GM12878 (cell line): ENCODE measurements at regions of chr22 and their contacts with region 1.

Region 1: GRCh38 chr22:25447686-25448434 is 116.6 kb upstream of the GRK3 start:
- DNase-seq: peak; percentile 84
- ATAC-seq: peak; percentile 92
- H3K4me3 ChIP-seq: peak overlapping the region; percentile 83
- H3K27ac ChIP-seq: peak overlapping the region; percentile 70
- H3K4me1 ChIP-seq: no peaks in the 10 kb centered on the region; the same call in 1 of the 2 replicates
- H3K27me3 ChIP-seq: no peaks in the 10 kb centered on the region
- CTCF ChIP-seq: peak; percentile 85 to 97 (median 93)
- EP300 ChIP-seq: no peak
- POLR2A ChIP-seq: peak; percentile 64
- RAD21 ChIP-seq: peak; percentile 42

Region 2: GRCh38 chr22:25235547-25236290 is 212.1 kb before region 1 on chr22:
- CTCF ChIA-PET with region 1: interaction called, 4 read pairs
- POLR2A ChIA-PET with region 1: no interaction called
- RAD21 ChIA-PET with region 1: no interaction called
- SMC1A ChIA-PET with region 1: no interaction called
- in situ Hi-C with region 1: no loop called
- intact Hi-C with region 1: loop called (anchors 5 kb)
- DNase-seq: no peak
- ATAC-seq: peak; percentile 99
- H3K4me3 ChIP-seq: no peak overlapping the region
- H3K27ac ChIP-seq: no peak overlapping the region
- H3K4me1 ChIP-seq: no peaks in the 10 kb centered on the region
- H3K27me3 ChIP-seq: no peaks in the 10 kb centered on the region
- CTCF ChIP-seq: peak; percentile 75 to 93 (median 87)
- EP300 ChIP-seq: no peak
- POLR2A ChIP-seq: no peak
- RAD21 ChIP-seq: peak; percentile 83

Region 3: DNA sequence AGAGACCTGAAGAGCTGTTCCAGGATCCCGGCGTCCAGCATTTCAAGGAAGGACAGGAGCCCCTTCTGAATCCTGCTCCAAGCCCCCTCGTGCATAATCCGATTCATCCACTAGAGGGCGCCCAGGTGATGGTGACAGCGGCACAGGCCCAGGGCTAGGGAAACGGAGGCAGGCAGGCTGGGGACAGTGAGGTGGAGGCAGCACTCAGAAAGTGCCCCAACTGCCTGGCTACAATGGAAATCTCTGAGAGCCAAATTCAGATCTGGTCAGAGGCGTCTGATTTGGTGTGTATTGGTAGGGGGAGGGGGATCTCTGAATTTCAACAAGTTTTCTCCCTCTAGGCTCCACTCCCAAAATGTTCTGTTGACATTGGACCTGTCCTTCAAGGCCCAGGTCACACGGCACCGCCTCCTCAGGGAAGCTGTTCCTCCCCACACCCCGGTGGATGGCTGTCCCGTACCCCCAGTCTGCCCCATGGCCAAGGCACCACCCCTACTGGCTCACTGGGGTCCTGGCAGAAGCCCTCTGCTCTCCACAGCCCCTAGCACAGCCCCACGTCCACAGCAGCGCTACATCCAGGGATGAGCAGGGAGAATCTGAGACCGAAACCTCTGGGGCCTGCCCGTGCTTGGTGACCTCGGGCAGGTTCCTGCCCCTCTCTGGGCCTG is 85.5 kb before region 1 on chr22:
- CTCF ChIA-PET with region 1: interaction called, 6 read pairs
- POLR2A ChIA-PET with region 1: no interaction called
- RAD21 ChIA-PET with region 1: interaction called, 3 read pairs
- SMC1A ChIA-PET with region 1: interaction called, 4 read pairs
- in situ Hi-C with region 1: loop called (anchors 5 kb)
- intact Hi-C with region 1: loop called (anchors 2 kb)
- DNase-seq: no peak
- ATAC-seq: peak; percentile 95
- H3K4me3 ChIP-seq: no peak overlapping the region
- H3K27ac ChIP-seq: no peak overlapping the region
- H3K4me1 ChIP-seq: peaks cover 5% of the 10 kb centered on the region; the same call in 1 of the 2 replicates
- H3K27me3 ChIP-seq: no peaks in the 10 kb centered on the region
- CTCF ChIP-seq: peak; percentile 80 to 88 (median 86); a peak in 5 of 6 replicates
- EP300 ChIP-seq: no peak
- POLR2A ChIP-seq: no peak
- RAD21 ChIP-seq: peak; percentile 93

Region 4: DNA sequence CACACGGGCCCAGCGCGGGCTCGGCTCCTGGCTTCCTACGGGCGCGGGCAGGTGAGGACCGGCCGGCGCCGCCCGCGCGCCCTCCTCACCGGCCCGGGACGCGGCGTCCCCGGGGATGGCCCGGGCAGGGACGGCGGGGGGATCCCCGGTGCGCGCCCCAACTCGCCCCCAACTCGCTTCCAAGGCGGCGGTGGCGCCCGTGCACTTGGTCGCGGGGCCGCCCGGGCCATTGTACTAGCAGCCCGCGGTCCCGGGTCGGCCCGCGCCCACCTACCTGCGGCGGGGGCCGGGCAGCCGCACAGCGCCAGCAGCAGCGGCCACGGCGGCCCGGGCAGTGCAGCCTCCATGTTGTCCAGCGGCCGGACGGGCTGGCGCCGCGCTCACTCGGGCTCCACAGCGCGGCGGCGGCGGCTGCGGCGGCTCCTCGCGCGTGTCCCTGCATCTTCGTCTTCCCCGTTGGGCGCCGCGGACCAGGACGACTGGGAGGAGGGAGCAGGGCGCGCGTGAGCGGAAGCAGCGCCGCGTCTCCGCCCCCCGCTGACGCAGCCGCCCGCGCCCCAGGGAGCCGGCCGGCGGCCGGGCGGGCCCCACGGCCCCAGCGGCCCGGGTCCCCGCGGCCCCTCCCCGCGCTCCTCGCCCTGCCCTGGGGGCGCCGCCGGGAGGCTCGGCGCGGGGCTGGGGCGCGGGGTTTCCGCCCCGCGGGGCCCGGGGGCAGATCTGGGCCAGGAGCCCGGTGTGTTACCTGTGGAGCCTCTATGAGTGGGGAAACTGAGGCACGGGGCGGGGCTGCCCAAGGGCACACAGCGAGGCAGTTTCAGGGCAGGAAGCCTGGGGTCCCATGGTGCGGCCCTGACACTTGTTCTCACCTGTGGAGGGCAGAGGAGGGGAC is 42.7 kb before region 1 on chr22:
- CTCF ChIA-PET with region 1: interaction called, 19 read pairs
- POLR2A ChIA-PET with region 1: interaction called, 3 read pairs
- RAD21 ChIA-PET with region 1: interaction called, 9 read pairs
- SMC1A ChIA-PET with region 1: interaction called, 7 read pairs
- in situ Hi-C with region 1: no loop called
- intact Hi-C with region 1: loop called (anchors 5 kb)
- DNase-seq: no peak
- ATAC-seq: peak; percentile 60
- H3K4me3 ChIP-seq: peak overlapping the region; percentile 87
- H3K27ac ChIP-seq: peak overlapping the region; percentile 75
- H3K4me1 ChIP-seq: peaks cover 30% of the 10 kb centered on the region
- H3K27me3 ChIP-seq: no peaks in the 10 kb centered on the region
- CTCF ChIP-seq: no peak
- EP300 ChIP-seq: no peak
- POLR2A ChIP-seq: peak; percentile 72
- RAD21 ChIP-seq: no peak

Region 5: GRCh38 chr22:25420925-25421904 is 26.6 kb before region 1 on chr22:
- CTCF ChIA-PET with region 1: interaction called, 11 read pairs
- POLR2A ChIA-PET with region 1: no interaction called
- RAD21 ChIA-PET with region 1: interaction called, 7 read pairs
- SMC1A ChIA-PET with region 1: interaction called, 6 read pairs
- in situ Hi-C with region 1: no loop called
- intact Hi-C with region 1: no loop called
- DNase-seq: no peak
- ATAC-seq: peak; percentile 57
- H3K4me3 ChIP-seq: peak overlapping the region; percentile 51; the same call in 1 of the 2 replicates
- H3K27ac ChIP-seq: no peak overlapping the region
- H3K4me1 ChIP-seq: peaks cover 20% of the 10 kb centered on the region
- H3K27me3 ChIP-seq: peaks cover 3 to 4% of the 10 kb centered on the region in 2 experiments; a peak in 3 of 4 replicates
- CTCF ChIP-seq: 0 out of 6 replicates have a peak, but pooled peaks of 1 of the 3 experiments have one; percentile 1
- EP300 ChIP-seq: no peak
- POLR2A ChIP-seq: no peak
- RAD21 ChIP-seq: no peak

Region 6: DNA sequence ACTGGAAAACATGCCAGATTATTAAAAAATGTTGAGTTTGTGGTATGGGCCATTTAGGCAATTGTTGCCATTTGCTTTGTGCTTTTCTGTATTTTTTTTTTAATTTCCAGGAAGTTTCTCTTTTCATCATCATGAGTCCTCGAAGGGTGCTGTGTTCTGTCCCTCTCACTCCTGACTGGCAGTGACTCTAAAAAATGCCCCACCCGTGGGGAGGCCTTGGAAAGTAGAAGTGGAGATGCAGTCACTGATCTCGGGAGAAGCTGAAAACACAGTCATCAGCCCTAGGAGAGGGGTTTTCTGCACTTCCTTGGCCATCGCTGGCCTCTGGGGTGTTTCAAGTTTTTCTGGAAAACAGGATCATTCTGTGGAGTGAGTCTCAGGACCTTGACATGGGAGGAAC is 18.1 kb after region 1 on chr22:
- CTCF ChIA-PET with region 1: interaction called, 10 read pairs
- POLR2A ChIA-PET with region 1: interaction called, 11 read pairs
- RAD21 ChIA-PET with region 1: interaction called, 5 read pairs
- SMC1A ChIA-PET with region 1: interaction called, 3 read pairs
- in situ Hi-C with region 1: no loop called
- intact Hi-C with region 1: no loop called
- DNase-seq: no peak
- ATAC-seq: no peak
- H3K4me3 ChIP-seq: no peak overlapping the region
- H3K27ac ChIP-seq: no peak overlapping the region
- H3K4me1 ChIP-seq: no peaks in the 10 kb centered on the region
- H3K27me3 ChIP-seq: no peaks in the 10 kb centered on the region
- CTCF ChIP-seq: no peak
- EP300 ChIP-seq: no peak
- POLR2A ChIP-seq: no peak
- RAD21 ChIP-seq: no peak

Region 7: GRCh38 chr22:25680956-25681355 is 233.1 kb after region 1 on chr22:
- CTCF ChIA-PET with region 1: no interaction called
- POLR2A ChIA-PET with region 1: no interaction called
- RAD21 ChIA-PET with region 1: no interaction called
- SMC1A ChIA-PET with region 1: no interaction called
- in situ Hi-C with region 1: no loop called
- intact Hi-C with region 1: no loop called
- DNase-seq: no peak
- ATAC-seq: no peak
- H3K4me3 ChIP-seq: no peak overlapping the region
- H3K27ac ChIP-seq: no peak overlapping the region
- H3K4me1 ChIP-seq: no peaks in the 10 kb centered on the region
- H3K27me3 ChIP-seq: no peaks in the 10 kb centered on the region
- CTCF ChIP-seq: no peak
- EP300 ChIP-seq: no peak
- POLR2A ChIP-seq: no peak
- RAD21 ChIP-seq: no peak

Region 8: GRCh38 chr22:25777870-25778269 is 330.0 kb after region 1 on chr22:
- CTCF ChIA-PET with region 1: interaction called, 15 read pairs
- POLR2A ChIA-PET with region 1: no interaction called
- RAD21 ChIA-PET with region 1: interaction called, 8 read pairs
- SMC1A ChIA-PET with region 1: interaction called, 9 read pairs
- in situ Hi-C with region 1: no loop called
- intact Hi-C with region 1: no loop called
- DNase-seq: peak; percentile 11
- ATAC-seq: peak; percentile 70
- H3K4me3 ChIP-seq: no peak overlapping the region
- H3K27ac ChIP-seq: no peak overlapping the region
- H3K4me1 ChIP-seq: no peaks in the 10 kb centered on the region
- H3K27me3 ChIP-seq: no peaks in the 10 kb centered on the region
- CTCF ChIP-seq: peak; percentile 25 to 44 (median 44); a peak in 5 of 6 replicates
- EP300 ChIP-seq: no peak
- POLR2A ChIP-seq: no peak
- RAD21 ChIP-seq: peak; percentile 36; the same call in 1 of the 2 replicates